Psoas muscle (tissue), 8 donors: ENCODE measurements at regions of chr11 and their contacts with region 1.

Region 1: DNA sequence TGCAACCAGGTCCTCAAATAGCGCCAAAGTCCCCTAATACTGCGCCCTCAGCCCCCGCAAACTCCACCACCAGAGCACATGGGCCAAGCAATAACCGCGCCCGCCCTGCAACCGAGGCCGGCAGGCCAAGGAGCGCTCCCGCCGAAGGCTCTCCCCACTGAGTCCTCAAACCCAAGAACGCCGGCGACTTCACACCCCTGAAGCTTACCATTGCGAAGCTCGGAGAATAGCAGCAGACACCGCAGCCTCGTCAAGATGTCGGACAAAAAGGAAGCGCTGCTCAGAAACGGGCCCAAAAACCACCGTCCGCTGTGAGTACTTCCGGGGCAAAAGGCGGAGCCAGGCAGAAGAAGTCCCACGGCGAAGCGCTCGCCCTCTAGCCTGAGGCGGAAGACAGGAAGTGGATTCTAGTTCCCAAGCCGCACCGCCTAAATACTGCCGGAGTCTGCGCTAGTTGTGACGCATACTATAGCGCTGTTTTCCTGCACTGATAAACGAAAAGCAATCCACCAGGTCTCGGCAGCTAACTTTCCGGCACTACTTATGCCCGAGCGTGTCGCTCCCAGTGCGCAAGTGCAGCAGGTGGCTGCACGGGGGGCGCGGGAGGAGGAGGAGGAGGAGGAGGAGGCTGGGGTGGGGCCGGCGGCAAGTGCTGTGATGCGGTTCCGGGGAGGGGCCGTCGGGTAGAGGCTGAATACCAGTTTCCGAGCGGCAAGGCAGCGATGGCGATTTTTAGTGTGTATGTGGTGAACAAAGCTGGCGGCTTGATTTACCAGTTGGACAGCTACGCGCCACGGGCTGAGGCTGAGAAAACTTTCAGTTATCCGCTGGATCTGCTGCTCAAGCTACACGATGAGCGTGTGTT is at the starts of genes RPS25 and TRAPPC4:
- DNase-seq: peak; percentile 96 to 97
- ATAC-seq: peak; percentile 93 to 95 (median 94)
- H3K4me3 ChIP-seq: peak within 1 kb of the TSS; percentile 88
- H3K27ac ChIP-seq: peak within 1 kb of the TSS; percentile 94
- H3K4me1 ChIP-seq: peaks cover 48% of the 10 kb centered on the region
- H3K27me3 ChIP-seq: no peaks in the 10 kb centered on the region
- CTCF ChIP-seq: no peak
- total RNA-seq, gene RPS25: 1,024 to 1,264 (median 1,219) TPM
- total RNA-seq, gene TRAPPC4: 46.1 to 61.5 (median 56.8) TPM

Region 2: GRCh38 chr11:118907051-118908042 is 111.0 kb before region 1 on chr11:
- intact Hi-C with region 1: loop called in 1 of 2 experiments (anchors 10 kb)
- DNase-seq: peak; percentile 83 to 92
- ATAC-seq: peak; percentile 36 to 61 (median 54)
- H3K4me3 ChIP-seq: peak overlapping the region; percentile 16
- H3K27ac ChIP-seq: peak overlapping the region; percentile 46
- H3K4me1 ChIP-seq: peaks cover 48% of the 10 kb centered on the region
- H3K27me3 ChIP-seq: no peaks in the 10 kb centered on the region
- CTCF ChIP-seq: peak; percentile 94

Region 3: DNA sequence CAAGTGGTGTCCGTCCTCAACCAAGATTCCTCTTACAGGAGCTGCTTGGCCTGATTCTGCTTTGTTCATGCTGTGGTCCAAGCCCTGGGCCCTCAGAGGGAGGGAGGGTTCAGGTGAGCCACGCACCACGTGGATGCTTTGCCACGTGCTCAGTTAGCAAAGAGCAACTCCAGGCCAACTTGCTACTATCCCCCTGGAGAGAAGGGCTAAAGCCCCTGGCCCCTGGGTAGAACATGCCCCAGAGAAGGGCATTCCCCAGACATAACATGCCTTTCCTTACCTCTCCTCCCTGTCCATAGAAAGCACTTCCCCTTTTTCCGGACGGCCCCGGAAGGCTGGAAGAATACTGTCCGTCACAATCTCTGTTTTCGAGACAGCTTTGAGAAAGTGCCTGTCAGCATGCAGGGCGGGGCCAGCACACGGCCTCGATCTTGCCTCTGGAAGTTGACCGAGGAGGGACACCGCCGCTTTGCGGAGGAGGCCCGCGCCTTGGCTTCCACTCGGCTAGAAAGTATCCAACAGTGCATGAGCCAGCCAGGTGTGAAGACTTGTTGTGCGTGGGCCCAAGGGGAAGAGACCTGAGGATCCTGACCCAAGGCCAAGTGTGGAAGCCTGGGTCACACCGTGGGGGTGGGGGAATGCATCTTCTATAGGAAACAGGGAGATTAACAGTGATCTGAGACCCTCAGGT is 38.0 kb before region 1 on chr11:
- intact Hi-C with region 1: no loop called
- DNase-seq: peak; percentile 49 to 72
- ATAC-seq: no peak
- H3K4me3 ChIP-seq: peak overlapping the region; percentile 18
- H3K27ac ChIP-seq: no peak overlapping the region
- H3K4me1 ChIP-seq: no peaks in the 10 kb centered on the region
- H3K27me3 ChIP-seq: no peaks in the 10 kb centered on the region
- CTCF ChIP-seq: no peak

Region 4: DNA sequence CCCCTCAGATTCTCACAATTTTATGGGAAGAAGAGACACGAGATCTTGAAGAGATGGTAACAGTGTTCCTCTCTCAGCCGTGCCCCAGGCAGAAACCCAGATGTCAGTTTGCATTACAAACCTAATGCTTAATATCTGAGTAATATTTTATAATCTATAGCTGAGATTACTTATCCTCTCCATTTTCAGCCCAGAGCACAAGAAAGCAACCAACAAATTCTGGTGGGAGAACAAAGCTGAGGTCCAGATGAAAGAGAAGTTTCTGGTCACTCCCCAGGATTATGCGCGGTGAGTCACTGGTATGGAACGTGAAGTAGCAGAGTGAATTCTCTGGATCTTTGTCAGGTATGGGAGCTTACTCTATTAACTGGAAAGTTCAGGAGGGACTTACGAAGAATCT is 19.5 kb before region 1 on chr11:
- intact Hi-C with region 1: loop called (anchors 1 to 2 kb)
- DNase-seq: no peak
- ATAC-seq: peak; percentile 29 to 55 (median 39)
- H3K4me3 ChIP-seq: peak overlapping the region; percentile 76
- H3K27ac ChIP-seq: peak overlapping the region; percentile 78
- H3K4me1 ChIP-seq: peaks cover 20% of the 10 kb centered on the region
- H3K27me3 ChIP-seq: no peaks in the 10 kb centered on the region
- CTCF ChIP-seq: no peak

Region 5: GRCh38 chr11:119067371-119068222 is 49.3 kb after region 1 on chr11 and contains the start of gene VPS11:
- intact Hi-C with region 1: no loop called
- DNase-seq: peak; percentile 98 to 99
- ATAC-seq: peak; percentile 98 to 99 (median 98)
- H3K4me3 ChIP-seq: peak within 1 kb of the TSS; percentile 96
- H3K27ac ChIP-seq: peak within 1 kb of the TSS; percentile 94
- H3K4me1 ChIP-seq: peaks cover 29% of the 10 kb centered on the region
- H3K27me3 ChIP-seq: no peaks in the 10 kb centered on the region
- CTCF ChIP-seq: no peak
- total RNA-seq, gene VPS11: 16.2 to 25.4 (median 19.6) TPM